ENCODE measurements at regions of chr6 and their contacts with region 1.

Region 1: DNA sequence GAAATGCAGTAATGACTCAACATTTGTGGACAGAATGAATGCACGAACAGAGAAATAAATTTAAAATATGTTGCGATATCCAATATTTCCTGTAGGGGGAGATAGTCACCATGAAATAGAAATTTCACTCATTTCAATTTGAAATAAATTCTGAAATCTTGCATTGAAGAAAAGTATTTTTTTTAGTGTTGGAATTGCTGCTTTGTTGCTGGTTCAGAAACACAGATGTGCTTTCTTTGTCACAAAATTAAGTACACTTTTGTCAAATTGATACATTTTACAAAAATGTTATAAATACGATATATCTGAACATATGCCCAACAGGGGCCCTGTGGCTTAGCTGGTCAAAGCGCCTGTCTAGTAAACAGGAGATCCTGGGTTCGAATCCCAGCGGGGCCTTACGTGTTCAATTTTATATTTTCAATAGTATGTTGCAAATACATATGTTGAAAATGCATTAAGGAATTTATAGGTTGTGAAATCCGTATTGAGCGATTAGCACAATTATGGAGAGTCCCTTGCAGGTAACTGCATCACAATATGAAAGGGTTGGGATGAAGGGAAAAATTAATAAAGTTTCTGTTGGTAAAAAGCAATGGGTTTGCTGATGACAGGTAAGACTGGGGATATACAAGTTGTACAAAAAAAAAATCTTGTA is 85.4 kb upstream of the PRSS16 start:
- DNase-seq: no peak
- H3K4me3 Mint-ChIP-seq: no peak overlapping the region
- H3K27ac Mint-ChIP-seq: peak overlapping the region; percentile 35
- H3K4me1 Mint-ChIP-seq: peaks cover 25% of the 10 kb centered on the region
- H3K27me3 Mint-ChIP-seq: peaks cover 12% of the 10 kb centered on the region

Region 2: GRCh38 chr6:27177485-27178406 is 15.7 kb after region 1 on chr6:
- CTCF ChIA-PET with region 1: interaction called, 14 read pairs
- DNase-seq: peak; percentile 83
- H3K4me3 Mint-ChIP-seq: peak overlapping the region; percentile 95
- H3K27ac Mint-ChIP-seq: peak overlapping the region; percentile 89
- H3K4me1 Mint-ChIP-seq: peaks cover 26% of the 10 kb centered on the region
- H3K27me3 Mint-ChIP-seq: peaks cover 54% of the 10 kb centered on the region

Region 3: DNA sequence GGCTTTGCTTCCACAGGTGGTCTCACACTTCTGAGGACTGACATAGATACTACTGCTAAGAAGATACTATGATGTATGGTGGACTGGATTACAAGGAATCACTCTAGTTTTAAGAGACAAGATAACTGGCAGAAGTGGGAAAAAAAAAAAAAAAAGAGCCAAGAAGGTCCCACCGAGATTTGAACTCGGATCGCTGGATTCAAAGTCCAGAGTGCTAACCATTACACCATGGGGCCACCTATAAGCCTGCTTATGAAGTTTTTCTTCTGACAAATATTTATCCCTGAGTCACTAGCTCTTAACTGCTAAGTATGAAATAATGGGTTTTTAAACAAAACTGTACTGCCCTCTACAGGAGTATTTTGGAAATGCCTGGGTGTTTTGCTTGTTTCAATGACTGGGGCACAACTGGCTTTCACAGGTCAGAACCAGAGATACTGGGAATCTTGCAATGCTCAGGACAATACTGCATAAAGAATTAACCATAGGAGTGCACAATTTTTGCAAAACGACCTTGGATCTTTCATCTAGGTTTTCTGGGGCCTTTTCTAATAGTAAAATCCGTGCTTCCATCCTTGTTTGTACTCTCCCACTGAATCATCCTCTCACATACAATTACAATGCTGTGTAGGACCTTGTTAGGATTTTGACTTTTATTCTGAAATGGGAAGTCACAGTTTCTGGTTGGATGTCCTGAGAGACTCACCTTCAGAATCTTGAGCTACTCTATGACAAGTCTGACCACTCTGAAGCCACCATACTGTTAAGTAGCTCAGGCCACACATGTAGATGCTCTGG is 633.8 kb after region 1 on chr6:
- CTCF ChIA-PET with region 1: interaction called, 17 read pairs
- DNase-seq: peak; percentile 54
- H3K4me3 Mint-ChIP-seq: no peak overlapping the region
- H3K27ac Mint-ChIP-seq: peak overlapping the region; percentile 25
- H3K4me1 Mint-ChIP-seq: peaks cover 42% of the 10 kb centered on the region
- H3K27me3 Mint-ChIP-seq: peaks cover 12% of the 10 kb centered on the region

Measured in activated naive CD4-positive, alpha-beta T cell treated with anti-CD3 and anti-CD28 coated beads, Interleukin-2, amount 10 ng/mL, durations not matched to agents 7 days and 5 days (primary cell).